Right ventricle myocardium inferior (tissue), 1 donor: ENCODE measurements at regions of chr1 and their contacts with region 1.

Region 1: DNA sequence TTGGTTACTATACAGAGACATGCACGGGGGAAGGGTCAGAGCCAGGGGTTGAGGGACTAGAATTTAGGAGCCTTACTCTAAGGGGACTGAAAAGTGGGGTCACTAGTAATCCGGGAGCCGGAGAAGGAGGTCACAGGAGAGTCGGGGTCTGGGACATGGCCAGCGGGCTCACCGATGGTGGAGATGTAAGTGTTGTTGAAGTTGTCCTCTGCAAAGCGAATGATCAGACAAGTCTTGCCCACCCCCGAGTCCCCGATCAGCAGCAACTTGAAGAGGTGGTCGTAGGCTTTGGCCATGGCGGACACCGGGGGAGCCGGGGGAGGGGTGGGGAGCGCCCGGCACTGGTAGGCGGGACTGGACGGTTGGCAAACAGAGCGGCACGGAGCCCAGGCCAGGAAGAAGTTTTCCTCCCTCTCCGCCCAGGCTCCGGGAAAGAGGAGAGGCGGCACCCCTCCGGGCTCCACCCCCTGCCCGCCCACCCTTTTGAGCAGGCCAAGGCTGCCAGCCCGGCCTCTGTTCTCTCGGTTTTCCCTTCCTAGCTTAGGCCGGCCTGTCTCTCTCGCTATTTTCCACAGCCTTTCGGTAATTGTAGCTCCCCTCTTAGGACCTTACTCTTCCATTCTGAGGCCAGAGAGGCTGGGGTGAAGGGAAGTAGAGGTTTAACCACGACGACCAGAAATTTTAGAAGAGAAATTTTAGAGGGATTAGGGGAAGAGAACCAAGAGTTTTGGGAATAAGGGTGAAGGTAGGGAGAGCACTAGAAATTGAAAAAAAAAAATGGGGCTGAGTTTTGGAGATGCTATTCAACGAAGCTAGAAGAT is at the start of gene RAB13:
- DNase-seq: peak; percentile 88
- ATAC-seq: peak; percentile 87
- total RNA-seq, gene RAB13: 61.4 TPM

Region 2: GRCh38 chr1:153127296-153127695 is 858.9 kb before region 1 on chr1:
- intact Hi-C with region 1: no loop called
- DNase-seq: no peak
- ATAC-seq: no peak

Region 3: DNA sequence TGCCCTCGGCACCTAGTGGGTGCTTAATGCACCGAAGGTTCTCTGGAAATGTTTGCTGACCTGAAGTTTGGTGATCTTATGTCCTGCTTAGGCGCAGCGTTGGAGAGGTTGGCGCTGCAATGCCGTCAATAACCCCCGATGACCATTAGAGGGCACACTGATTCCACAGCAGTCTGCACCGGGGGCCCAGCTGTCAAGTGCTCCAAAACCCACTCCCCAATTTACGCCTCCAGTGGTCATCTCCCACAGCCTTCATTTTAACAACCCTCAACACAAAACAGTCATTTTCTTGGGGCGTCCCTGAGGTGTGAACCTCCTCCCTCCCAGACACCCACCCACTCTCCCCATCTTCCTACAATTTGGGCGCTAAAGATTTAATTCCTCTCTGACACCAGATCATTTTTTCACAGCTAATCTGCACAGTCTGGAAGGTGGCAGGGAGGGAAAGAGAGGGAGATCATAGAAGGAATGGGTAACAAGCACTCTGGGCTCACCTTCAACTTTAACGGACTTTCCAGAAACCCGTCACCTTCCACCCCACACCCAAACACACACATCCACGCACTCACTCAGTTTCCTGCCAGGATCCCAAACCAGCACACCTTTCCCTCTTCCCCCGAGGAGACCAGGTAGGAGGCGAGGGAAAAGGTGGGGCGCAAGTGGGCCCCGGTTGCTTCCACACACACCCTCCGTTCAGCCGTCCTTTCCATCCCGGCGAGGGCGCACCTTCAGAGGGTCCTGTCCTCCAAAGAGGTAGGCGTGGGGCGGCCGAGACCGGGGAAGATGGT is 308.2 kb before region 1 on chr1:
- intact Hi-C with region 1: loop called (anchors 2 kb)
- DNase-seq: no peak
- ATAC-seq: peak; percentile 74

Region 4: GRCh38 chr1:153796791-153797659 is 189.1 kb before region 1 on chr1:
- intact Hi-C with region 1: loop called (anchors 1 kb)
- DNase-seq: no peak
- ATAC-seq: peak; percentile 66

Region 5: DNA sequence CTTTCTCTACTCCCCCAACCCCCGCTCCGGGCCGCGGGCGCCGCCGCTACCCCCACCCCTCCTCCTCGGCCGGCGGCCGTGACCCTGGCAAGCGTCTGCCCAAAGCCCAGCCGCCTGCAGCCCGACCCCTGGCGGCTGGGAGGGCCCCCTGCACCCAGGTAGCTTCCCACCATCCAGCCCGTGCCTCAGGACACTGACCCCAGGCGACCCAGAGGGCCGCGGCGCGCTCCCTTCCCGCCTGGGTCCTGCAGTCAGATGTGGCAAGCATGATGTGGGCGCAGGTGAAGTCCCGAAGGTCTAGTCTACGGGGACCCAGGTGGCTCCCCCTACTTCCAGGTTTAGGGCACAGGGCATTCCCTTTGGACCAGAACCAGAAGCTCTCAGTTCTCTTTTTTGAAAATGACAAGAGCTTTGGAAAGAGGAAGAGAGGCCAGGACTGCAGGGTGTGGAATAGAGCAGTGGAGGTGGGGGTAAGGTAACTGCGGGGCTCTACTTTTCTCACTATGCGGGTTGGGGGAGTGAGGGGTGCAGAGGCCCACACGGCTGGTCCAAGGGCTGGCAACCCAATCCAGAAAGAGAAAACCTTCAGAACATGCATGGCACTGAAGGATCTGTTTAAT is 39.4 kb before region 1 on chr1 and contains the start of gene DENND4B:
- intact Hi-C with region 1: loop called (anchors 1 kb)
- DNase-seq: peak; percentile 93
- ATAC-seq: peak; percentile 76
- total RNA-seq, gene DENND4B: 51.6 TPM